ENCODE measurements at regions of chr4 and their contacts with region 1.

Region 1: GRCh38 chr4:184762100-184762499 is 28.2 kb upstream of the CENPU start:
- DNase-seq: peak; percentile 90
- H3K4me3 Mint-ChIP-seq: peak overlapping the region; percentile 71
- H3K27ac Mint-ChIP-seq: peak overlapping the region; percentile 93
- H3K4me1 Mint-ChIP-seq: peaks cover 19% of the 10 kb centered on the region
- H3K27me3 Mint-ChIP-seq: no peaks in the 10 kb centered on the region

Region 2: GRCh38 chr4:184713887-184714286 is 48.2 kb before region 1 on chr4:
- intact Hi-C with region 1: no loop called
- DNase-seq: peak; percentile 44
- H3K4me3 Mint-ChIP-seq: no peak overlapping the region
- H3K27ac Mint-ChIP-seq: no peak overlapping the region
- H3K4me1 Mint-ChIP-seq: peaks cover 26% of the 10 kb centered on the region
- H3K27me3 Mint-ChIP-seq: no peaks in the 10 kb centered on the region

Region 3: DNA sequence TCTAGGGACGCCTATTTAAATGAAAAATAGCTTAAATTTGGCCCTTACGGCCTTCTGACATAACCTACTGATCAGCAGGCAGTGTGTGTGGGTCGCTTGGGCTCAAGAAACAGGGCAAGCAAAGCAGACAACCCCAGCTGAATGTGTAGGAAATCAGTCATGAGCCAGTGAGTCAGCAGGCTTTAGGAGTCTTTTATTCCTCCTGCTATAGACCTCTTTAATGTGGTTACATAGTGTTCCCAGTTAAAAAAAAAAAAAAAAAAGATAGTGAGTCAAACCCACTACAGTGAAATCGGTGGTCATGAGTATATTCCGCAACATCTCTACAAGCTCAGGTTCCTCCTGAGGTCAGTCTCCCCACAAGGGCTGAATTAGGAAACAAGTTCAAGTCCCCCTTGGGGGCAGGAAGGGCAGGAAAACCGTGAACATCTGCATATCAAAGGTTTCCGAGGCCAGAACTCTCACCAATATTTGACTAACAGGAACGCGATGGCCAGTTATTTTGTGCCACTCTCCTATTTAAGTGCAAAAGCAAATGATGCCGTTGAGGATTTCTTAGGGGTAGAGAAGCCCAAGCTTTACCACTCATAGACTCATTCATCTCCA is 31.0 kb after region 1 on chr4:
- intact Hi-C with region 1: loop called (anchors 1 kb)
- DNase-seq: peak; percentile 69
- H3K4me3 Mint-ChIP-seq: peak overlapping the region; percentile 40
- H3K27ac Mint-ChIP-seq: peak overlapping the region; percentile 74
- H3K4me1 Mint-ChIP-seq: peaks cover 50% of the 10 kb centered on the region
- H3K27me3 Mint-ChIP-seq: no peaks in the 10 kb centered on the region

Region 4: GRCh38 chr4:184803133-184803532 is 41.0 kb after region 1 on chr4:
- intact Hi-C with region 1: no loop called
- DNase-seq: no peak
- H3K4me3 Mint-ChIP-seq: no peak overlapping the region
- H3K27ac Mint-ChIP-seq: no peak overlapping the region
- H3K4me1 Mint-ChIP-seq: peaks cover 19% of the 10 kb centered on the region
- H3K27me3 Mint-ChIP-seq: no peaks in the 10 kb centered on the region

Region 5: DNA sequence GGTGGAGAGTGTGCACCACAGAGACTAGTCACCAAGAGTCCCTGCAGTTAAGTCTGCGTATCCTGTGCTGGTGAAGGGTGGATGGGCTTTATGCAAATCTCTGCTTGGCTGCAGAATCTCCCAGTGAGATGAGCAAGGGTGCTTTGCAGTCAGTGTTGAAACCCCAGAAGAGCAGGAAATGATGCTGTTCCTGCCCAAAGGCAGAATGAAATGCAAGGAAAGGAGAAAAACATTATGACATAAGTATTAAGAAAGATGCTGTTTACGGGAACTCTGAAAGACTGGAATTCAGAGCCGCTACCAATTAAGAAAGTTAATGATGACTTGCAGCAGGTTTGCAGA is 89.1 kb after region 1 on chr4:
- intact Hi-C with region 1: loop called (anchors 2 kb)
- DNase-seq: peak; percentile 80
- H3K4me3 Mint-ChIP-seq: no peak overlapping the region
- H3K27ac Mint-ChIP-seq: no peak overlapping the region
- H3K4me1 Mint-ChIP-seq: peaks cover 34% of the 10 kb centered on the region
- H3K27me3 Mint-ChIP-seq: peaks cover 10% of the 10 kb centered on the region